PC-3 (cell line): ENCODE measurements at regions of chr2 and their contacts with region 1.

Region 1: DNA sequence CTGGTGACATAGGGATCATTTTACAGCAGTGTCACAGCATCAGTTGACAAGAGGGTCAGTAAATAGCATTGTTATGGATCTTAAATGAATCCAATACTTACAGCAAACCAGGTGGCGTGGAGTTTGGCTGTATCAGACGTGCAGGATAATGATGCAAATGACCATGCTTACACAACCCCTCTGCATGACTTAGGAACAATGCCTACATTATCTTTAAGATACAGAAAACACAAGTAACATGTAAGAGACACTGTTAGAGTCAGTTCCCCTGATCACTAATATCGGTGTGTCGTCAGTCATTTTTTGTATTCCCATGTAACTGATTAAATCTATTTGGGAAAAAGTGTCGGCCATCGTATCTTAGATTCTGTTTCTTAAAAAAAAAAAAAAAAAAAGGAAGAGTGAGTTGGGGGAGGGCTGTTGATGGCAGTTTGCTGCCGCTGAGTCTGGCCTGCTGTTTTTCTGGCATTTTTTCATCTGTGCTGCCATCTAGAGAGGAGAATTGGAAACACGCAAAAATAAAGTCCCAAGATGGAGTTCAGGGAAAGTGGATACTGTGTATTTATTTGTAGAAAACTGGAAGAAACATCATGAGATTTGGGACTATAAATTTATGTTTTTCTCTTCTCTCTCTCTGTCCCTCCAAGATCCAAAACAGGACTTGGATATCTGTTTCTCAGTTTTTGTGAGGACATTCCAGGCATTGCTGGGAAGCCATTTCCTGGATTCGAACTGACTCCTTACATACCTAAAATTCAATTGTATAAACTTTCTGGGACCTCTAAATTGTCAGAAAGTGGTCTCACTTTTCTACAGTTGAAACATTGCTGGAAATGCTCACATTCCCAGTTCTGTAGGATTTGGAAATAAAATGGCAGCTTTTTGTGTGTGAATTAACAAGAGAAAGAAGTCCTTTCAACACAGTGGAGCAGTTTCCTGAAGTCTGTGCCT is 60.3 kb upstream of the AGPS start:
- DNase-seq: peak; percentile 75
- ATAC-seq: peak; percentile 70
- H3K4me3 ChIP-seq: no peak overlapping the region
- H3K27ac ChIP-seq: no peak overlapping the region
- H3K4me1 ChIP-seq: peaks cover 10% of the 10 kb centered on the region
- H3K27me3 ChIP-seq: no peaks in the 10 kb centered on the region
- CTCF ChIP-seq: peak; percentile 76

Region 2: GRCh38 chr2:177212106-177212890 is 120.0 kb before region 1 on chr2 and contains the start of gene HNRNPA3:
- CTCF ChIA-PET with region 1: no interaction called
- POLR2A ChIA-PET with region 1: no interaction called
- intact Hi-C with region 1: loop called (anchors 5 kb)
- DNase-seq: peak; percentile 99
- ATAC-seq: peak; percentile 86
- H3K4me3 ChIP-seq: peak within 1 kb of the TSS; percentile 92
- H3K27ac ChIP-seq: peak within 1 kb of the TSS; percentile 88
- H3K4me1 ChIP-seq: peaks cover 16% of the 10 kb centered on the region
- H3K27me3 ChIP-seq: no peaks in the 10 kb centered on the region
- CTCF ChIP-seq: no peak; the same call in 1 of the 2 replicates
- total RNA-seq, gene HNRNPA3: 50.3 and 90.2 TPM in 2 replicates

Region 3: GRCh38 chr2:177296040-177296439 is 36.3 kb before region 1 on chr2:
- CTCF ChIA-PET with region 1: no interaction called
- POLR2A ChIA-PET with region 1: no interaction called
- intact Hi-C with region 1: loop called (anchors 1 kb)
- DNase-seq: peak; percentile 57
- ATAC-seq: peak; percentile 65
- H3K4me3 ChIP-seq: no peak overlapping the region
- H3K27ac ChIP-seq: no peak overlapping the region
- H3K4me1 ChIP-seq: no peaks in the 10 kb centered on the region
- H3K27me3 ChIP-seq: no peaks in the 10 kb centered on the region
- CTCF ChIP-seq: peak; percentile 62

Region 4: GRCh38 chr2:177392373-177393202 is 60.3 kb after region 1 on chr2 and contains the start of gene AGPS:
- CTCF ChIA-PET with region 1: interaction called, 10 read pairs
- POLR2A ChIA-PET with region 1: interaction called, 4 read pairs
- intact Hi-C with region 1: no loop called
- DNase-seq: peak; percentile 77
- ATAC-seq: peak; percentile 55
- H3K4me3 ChIP-seq: peak within 1 kb of the TSS; percentile 89
- H3K27ac ChIP-seq: peak within 1 kb of the TSS; percentile 66
- H3K4me1 ChIP-seq: peaks cover 47% of the 10 kb centered on the region
- H3K27me3 ChIP-seq: no peaks in the 10 kb centered on the region
- CTCF ChIP-seq: no peak
- total RNA-seq, gene AGPS: 147 and 229 TPM in 2 replicates

Region 5: GRCh38 chr2:177419274-177419673 is 87.0 kb after region 1 on chr2:
- CTCF ChIA-PET with region 1: interaction called, 6 read pairs
- POLR2A ChIA-PET with region 1: interaction called, 4 read pairs
- intact Hi-C with region 1: loop called (anchors 1 kb)
- DNase-seq: peak; percentile 28
- ATAC-seq: no peak
- H3K4me3 ChIP-seq: no peak overlapping the region
- H3K27ac ChIP-seq: no peak overlapping the region
- H3K4me1 ChIP-seq: peaks cover 9% of the 10 kb centered on the region; the same call in 1 of the 2 replicates
- H3K27me3 ChIP-seq: no peaks in the 10 kb centered on the region
- CTCF ChIP-seq: no peak

Region 6: GRCh38 chr2:177724398-177725287 is 392.3 kb after region 1 on chr2:
- CTCF ChIA-PET with region 1: no interaction called
- POLR2A ChIA-PET with region 1: no interaction called
- intact Hi-C with region 1: loop called (anchors 1 kb)
- DNase-seq: peak; percentile 62
- ATAC-seq: peak; percentile 81
- H3K4me3 ChIP-seq: no peak overlapping the region
- H3K27ac ChIP-seq: no peak overlapping the region
- H3K4me1 ChIP-seq: no peaks in the 10 kb centered on the region
- H3K27me3 ChIP-seq: peaks cover 52% of the 10 kb centered on the region
- CTCF ChIP-seq: peak; percentile 95

Region 7: DNA sequence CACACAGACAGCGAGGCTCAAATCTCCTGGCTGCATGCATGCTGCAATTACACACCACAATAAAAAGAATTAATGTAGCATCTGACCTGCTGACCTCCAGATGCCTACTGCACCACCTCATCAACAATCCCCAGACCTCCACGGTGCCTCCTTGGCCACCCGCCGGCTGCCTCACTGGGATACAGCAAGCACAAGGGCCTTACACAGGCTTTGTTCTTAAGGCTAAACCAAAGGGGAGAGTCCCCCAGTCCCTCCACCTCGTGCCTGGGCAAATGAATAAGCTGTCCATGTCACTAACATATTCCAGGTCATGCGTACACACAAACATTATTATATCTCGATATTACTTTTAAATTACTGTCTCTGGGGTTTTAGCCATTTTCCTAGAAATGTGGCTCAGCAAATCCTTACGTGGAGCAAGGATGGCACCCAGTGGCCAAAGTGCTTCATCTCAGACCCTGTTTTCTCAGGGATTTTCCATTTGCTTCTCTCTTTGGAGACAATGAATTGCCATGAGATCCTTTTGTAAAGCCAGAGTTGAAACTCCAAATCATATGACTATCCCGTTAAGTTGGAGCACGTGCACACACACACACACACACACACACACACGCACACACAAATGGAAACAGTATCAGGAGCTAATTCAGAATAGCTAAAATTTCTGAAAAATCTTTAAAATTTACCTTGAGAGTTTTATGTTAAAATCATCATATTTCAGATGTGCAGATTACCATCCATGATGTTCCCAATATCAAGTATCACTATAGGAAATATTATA is 426.5 kb after region 1 on chr2:
- CTCF ChIA-PET with region 1: no interaction called
- POLR2A ChIA-PET with region 1: no interaction called
- intact Hi-C with region 1: loop called (anchors 2 kb)
- DNase-seq: peak; percentile 59
- ATAC-seq: peak; percentile 23; the same call in 1 of the 2 replicates
- H3K4me3 ChIP-seq: no peak overlapping the region
- H3K27ac ChIP-seq: no peak overlapping the region
- H3K4me1 ChIP-seq: no peaks in the 10 kb centered on the region
- H3K27me3 ChIP-seq: peaks cover 26% of the 10 kb centered on the region; the same call in 1 of the 2 replicates
- CTCF ChIP-seq: peak; percentile 68